B cell (primary cell): ENCODE measurements at regions of chr3 and their contacts with region 1.

Region 1: GRCh38 chr3:14921078-14921616 is 26.2 kb upstream of the NR2C2 start:
- DNase-seq: peak; percentile 82
- ATAC-seq: peak; percentile 98
- H3K4me3 ChIP-seq: no peak overlapping the region
- H3K4me3 Mint-ChIP-seq: no peak overlapping the region
- H3K27ac ChIP-seq: no peak overlapping the region
- H3K27ac Mint-ChIP-seq: no peak overlapping the region
- H3K4me1 ChIP-seq: peaks cover 0 to 6% of the 10 kb centered on the region in 2 donors
- H3K4me1 Mint-ChIP-seq: no peaks in the 10 kb centered on the region
- H3K27me3 ChIP-seq: no peaks in the 10 kb centered on the region
- H3K27me3 Mint-ChIP-seq: peaks cover 7% of the 10 kb centered on the region
- CTCF ChIP-seq: peak; percentile 99

Region 2: GRCh38 chr3:14203521-14204079 is 717.5 kb before region 1 on chr3:
- CTCF ChIA-PET with region 1: interaction called, 31 read pairs
- POLR2A ChIA-PET with region 1: no interaction called
- intact Hi-C with region 1: no loop called
- DNase-seq: peak; percentile 61
- ATAC-seq: no peak
- H3K4me3 ChIP-seq: no peak overlapping the region
- H3K4me3 Mint-ChIP-seq: no peak overlapping the region
- H3K27ac ChIP-seq: no peak overlapping the region
- H3K27ac Mint-ChIP-seq: no peak overlapping the region
- H3K4me1 ChIP-seq: no peaks in the 10 kb centered on the region
- H3K4me1 Mint-ChIP-seq: peaks cover 2% of the 10 kb centered on the region
- H3K27me3 ChIP-seq: no peaks in the 10 kb centered on the region
- H3K27me3 Mint-ChIP-seq: no peaks in the 10 kb centered on the region
- CTCF ChIP-seq: peak; percentile 87

Region 3: DNA sequence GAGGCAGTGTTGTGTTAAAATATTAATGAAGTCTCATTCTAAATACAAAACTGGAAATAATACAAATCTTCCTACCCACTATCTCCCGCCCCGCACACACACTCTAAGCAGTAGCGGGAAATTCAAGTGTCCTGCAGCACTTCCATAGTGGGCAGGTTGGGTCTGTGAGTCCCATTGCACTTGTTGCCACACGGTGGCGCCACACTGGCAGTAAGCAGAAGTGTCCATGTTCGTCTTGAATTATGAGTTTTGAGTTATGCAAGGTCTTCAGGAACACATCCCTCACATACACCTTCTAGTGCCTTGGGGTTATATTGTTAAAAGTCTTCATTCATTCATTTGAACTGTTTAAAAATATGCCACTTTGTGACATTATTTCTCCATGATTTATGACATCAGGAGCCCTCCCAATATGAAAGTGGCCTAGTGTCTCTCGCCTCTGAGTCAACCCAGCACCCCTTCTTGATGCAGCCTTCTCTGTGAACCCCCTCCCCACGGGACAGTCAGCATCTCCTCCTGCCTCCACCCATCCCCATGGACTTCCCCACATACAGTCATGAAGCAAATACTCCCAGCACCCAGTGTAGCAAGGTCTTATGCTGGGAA is 287.2 kb before region 1 on chr3:
- CTCF ChIA-PET with region 1: interaction called, 23 read pairs
- POLR2A ChIA-PET with region 1: no interaction called
- intact Hi-C with region 1: no loop called
- DNase-seq: peak; percentile 62
- ATAC-seq: peak; percentile 60
- H3K4me3 ChIP-seq: no peak overlapping the region
- H3K4me3 Mint-ChIP-seq: no peak overlapping the region
- H3K27ac ChIP-seq: no peak overlapping the region
- H3K27ac Mint-ChIP-seq: no peak overlapping the region
- H3K4me1 ChIP-seq: no peaks in the 10 kb centered on the region
- H3K4me1 Mint-ChIP-seq: no peaks in the 10 kb centered on the region
- H3K27me3 ChIP-seq: peaks cover 0 to 49% (median 22%) of the 10 kb centered on the region in 4 experiments
- H3K27me3 Mint-ChIP-seq: peaks cover 65% of the 10 kb centered on the region
- CTCF ChIP-seq: peak; percentile 81

Region 4: DNA sequence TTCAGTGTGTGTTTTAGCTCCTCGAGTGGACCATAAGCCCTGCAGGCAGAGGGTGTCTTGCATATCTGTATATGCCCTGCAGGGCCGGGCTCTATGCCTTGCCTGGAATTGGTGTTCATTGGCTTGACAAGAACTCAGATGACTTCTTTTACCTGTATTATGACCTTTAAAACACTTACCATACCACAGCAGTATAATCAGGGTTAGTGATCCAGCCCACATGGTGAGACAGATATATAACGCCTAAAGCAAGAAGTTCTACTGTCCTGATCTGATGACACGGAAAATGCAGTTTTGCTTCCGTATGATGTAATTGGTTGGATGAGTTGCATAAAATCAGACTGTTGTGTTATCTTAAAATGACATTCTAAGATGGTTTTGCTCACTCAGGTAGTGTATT is 260.2 kb before region 1 on chr3:
- CTCF ChIA-PET with region 1: no interaction called
- POLR2A ChIA-PET with region 1: no interaction called
- intact Hi-C with region 1: no loop called
- DNase-seq: no peak
- ATAC-seq: no peak
- H3K4me3 ChIP-seq: no peak overlapping the region
- H3K4me3 Mint-ChIP-seq: no peak overlapping the region
- H3K27ac ChIP-seq: no peak overlapping the region
- H3K27ac Mint-ChIP-seq: no peak overlapping the region
- H3K4me1 ChIP-seq: no peaks in the 10 kb centered on the region
- H3K4me1 Mint-ChIP-seq: peaks cover 5% of the 10 kb centered on the region
- H3K27me3 ChIP-seq: no peaks in the 10 kb centered on the region
- H3K27me3 Mint-ChIP-seq: no peaks in the 10 kb centered on the region
- CTCF ChIP-seq: no peak

Region 5: DNA sequence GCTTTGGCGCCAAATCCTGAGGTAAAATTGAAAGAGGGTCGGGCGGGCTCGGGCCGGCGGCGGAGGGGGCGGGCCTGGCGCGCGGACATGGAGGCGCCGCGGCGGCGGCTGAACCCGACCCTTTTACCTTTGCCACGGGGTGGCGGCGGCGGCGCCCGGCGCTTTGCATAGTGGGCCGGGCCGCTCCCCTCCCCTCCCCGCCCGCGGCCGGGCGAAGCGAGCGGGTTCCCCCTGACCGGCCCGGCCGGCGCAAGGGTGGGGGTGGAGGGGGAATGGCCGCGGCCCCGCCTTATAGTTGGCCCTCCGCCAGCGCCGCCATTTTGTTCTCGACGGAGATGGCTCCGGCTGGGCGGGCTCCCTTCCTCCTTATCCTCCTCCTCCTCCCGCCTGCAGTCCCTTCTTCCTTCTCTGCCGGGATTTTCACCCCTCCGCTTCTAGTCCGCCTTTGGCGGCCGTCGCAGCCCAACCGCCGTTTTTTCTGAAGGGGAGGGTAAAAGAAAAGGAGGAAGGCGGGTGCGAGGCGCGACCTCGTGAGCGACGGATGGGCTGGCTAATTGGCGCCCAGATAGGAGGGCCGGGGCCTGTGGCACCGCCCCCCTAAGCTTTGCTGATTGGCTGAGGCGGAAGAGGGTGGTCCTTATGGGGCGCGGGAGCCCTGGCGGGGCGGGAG is 26.9 kb after region 1 on chr3:
- CTCF ChIA-PET with region 1: interaction called, 12 read pairs
- POLR2A ChIA-PET with region 1: no interaction called
- intact Hi-C with region 1: loop called (anchors 2 kb)
- DNase-seq: peak; percentile 98
- ATAC-seq: peak; percentile 86
- H3K4me3 ChIP-seq: peak overlapping the region; percentile 30 to 100 (median 94)
- H3K4me3 Mint-ChIP-seq: peak overlapping the region; percentile 99
- H3K27ac ChIP-seq: peak overlapping the region; percentile 98 to 99
- H3K27ac Mint-ChIP-seq: peak overlapping the region; percentile 100
- H3K4me1 ChIP-seq: peaks cover 25 to 29% of the 10 kb centered on the region in 2 donors
- H3K4me1 Mint-ChIP-seq: peaks cover 49% of the 10 kb centered on the region
- H3K27me3 ChIP-seq: no peaks in the 10 kb centered on the region
- H3K27me3 Mint-ChIP-seq: no peaks in the 10 kb centered on the region
- CTCF ChIP-seq: no peak

Region 6: DNA sequence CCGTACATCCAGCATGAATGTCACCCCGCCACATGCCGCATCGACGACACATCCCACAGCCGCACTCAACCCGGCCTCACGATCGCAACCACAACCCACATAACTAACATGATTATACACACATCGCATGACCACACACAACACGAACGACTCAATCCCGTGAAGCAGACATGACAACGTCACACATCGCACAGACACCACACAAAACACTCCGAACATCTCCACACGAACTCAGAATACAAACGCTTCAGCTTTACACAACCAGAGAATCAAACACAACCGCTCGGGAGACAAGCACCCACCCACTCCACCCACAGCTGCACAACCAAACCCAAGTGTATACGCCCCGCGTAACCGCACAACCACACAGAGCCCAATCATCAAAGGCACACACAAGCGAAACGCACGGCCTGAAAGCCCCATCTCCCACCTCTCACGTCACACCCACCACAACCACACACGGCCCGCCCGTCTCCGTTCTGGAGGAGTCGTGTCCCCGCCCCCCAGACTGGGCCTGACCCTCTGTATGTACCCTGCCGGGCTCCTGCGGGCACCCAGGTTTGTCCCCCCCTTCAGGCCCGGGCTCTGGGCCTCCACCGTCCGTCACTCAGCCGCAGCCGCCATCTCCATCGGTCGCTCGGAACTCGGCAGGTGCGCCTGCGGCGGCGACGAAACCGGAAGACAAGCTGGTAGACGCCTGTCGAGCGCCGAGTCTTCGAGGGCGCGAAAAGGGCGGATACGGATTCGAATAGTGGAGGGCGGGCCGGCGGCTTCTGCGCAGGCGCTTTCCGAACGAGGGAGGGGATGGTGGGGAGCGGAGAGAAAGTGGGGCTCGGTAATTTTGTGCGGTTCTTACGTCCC is 177.6 kb after region 1 on chr3 and contains the start of gene RBSN:
- CTCF ChIA-PET with region 1: interaction called, 3 read pairs
- POLR2A ChIA-PET with region 1: no interaction called
- intact Hi-C with region 1: loop called (anchors 5 kb)
- DNase-seq: peak; percentile 97
- ATAC-seq: peak; percentile 84
- H3K4me3 ChIP-seq: peak within 1 kb of the TSS; percentile 73 to 94 (median 82)
- H3K4me3 Mint-ChIP-seq: peak within 1 kb of the TSS; percentile 98
- H3K27ac ChIP-seq: peak within 1 kb of the TSS; percentile 91 to 97
- H3K27ac Mint-ChIP-seq: peak within 1 kb of the TSS; percentile 96
- H3K4me1 ChIP-seq: peaks cover 13 to 23% of the 10 kb centered on the region in 2 donors
- H3K4me1 Mint-ChIP-seq: peaks cover 30% of the 10 kb centered on the region
- H3K27me3 ChIP-seq: peaks cover 0 to 9% (median 0%) of the 10 kb centered on the region in 4 experiments
- H3K27me3 Mint-ChIP-seq: no peaks in the 10 kb centered on the region
- CTCF ChIP-seq: no peak
- total RNA-seq, gene RBSN: 31.2 and 32.6 TPM in 2 replicates

Region 7: GRCh38 chr3:15405448-15406050 is 484.4 kb after region 1 on chr3:
- CTCF ChIA-PET with region 1: interaction called, 4 read pairs
- POLR2A ChIA-PET with region 1: no interaction called
- intact Hi-C with region 1: loop called (anchors 10 kb)
- DNase-seq: peak; percentile 80
- ATAC-seq: peak; percentile 73
- H3K4me3 ChIP-seq: no peak overlapping the region
- H3K4me3 Mint-ChIP-seq: no peak overlapping the region
- H3K27ac ChIP-seq: no peak overlapping the region
- H3K27ac Mint-ChIP-seq: no peak overlapping the region
- H3K4me1 ChIP-seq: peaks cover 25 to 30% of the 10 kb centered on the region in 2 donors
- H3K4me1 Mint-ChIP-seq: peaks cover 19% of the 10 kb centered on the region
- H3K27me3 ChIP-seq: no peaks in the 10 kb centered on the region
- H3K27me3 Mint-ChIP-seq: no peaks in the 10 kb centered on the region
- CTCF ChIP-seq: peak; percentile 84